ENCODE measurements at regions of chr22 and their contacts with region 1.

Region 1: DNA sequence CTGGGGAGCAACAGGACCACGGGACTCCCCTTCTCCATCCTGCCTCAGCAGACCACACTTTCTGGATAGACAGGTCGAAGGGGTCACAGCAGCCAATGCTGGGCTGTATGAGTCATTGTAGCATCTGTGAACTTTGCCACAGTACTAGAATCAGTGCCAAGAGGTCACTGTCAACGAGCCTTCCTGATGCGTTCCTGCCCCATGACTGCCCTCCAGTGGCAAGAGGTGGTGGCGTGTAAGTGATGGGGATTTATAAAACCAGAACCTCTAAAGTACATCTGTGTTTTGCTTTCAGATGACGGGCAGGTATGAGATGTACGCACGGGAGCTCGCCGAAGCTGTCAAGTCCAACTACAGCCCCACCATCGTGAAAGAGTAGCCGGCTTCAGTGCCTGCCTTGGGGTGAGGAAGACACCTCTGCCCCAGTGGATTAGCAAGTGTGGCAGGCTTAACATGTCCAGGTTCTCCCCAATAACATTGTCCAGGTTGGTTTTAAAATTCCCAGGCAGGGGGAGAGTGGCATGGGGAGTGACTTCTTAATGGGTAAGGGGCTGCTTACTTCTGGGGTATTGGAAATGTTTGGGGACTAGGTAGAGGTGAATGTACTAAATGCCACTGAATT is 29.4 kb downstream of the GUCD1 start:
- DNase-seq: peak; percentile 74 to 95 (median 86)
- H3K4me3 ChIP-seq: no peak overlapping the region
- H3K27ac ChIP-seq: peak overlapping the region in 2 of 5 donors; percentile 20 to 50
- H3K4me1 ChIP-seq: peaks cover 0 to 6% of the 10 kb centered on the region in 2 donors
- H3K27me3 ChIP-seq: no peaks in the 10 kb centered on the region
- CTCF ChIP-seq: peak; percentile 74 to 89 (median 82)
- POLR2A ChIP-seq: no peak

Region 2: GRCh38 chr22:24325105-24325757 is 200.3 kb before region 1 on chr22:
- intact Hi-C with region 1: loop called in 1 of 2 experiments (anchors 10 kb)
- DNase-seq: peak in 3 of 7 donors; percentile 23 to 36 (median 32)
- H3K4me3 ChIP-seq: no peak overlapping the region
- H3K27ac ChIP-seq: no peak overlapping the region
- H3K4me1 ChIP-seq: peaks cover 0 to 12% of the 10 kb centered on the region in 2 donors
- H3K27me3 ChIP-seq: no peaks in the 10 kb centered on the region
- CTCF ChIP-seq: peak; percentile 38 to 84 (median 76)
- POLR2A ChIP-seq: no peak

Measured in adrenal gland (tissue), 19 donors.